OCI-LY7 (cell line): ENCODE measurements at regions of chr3 and their contacts with region 1.

Region 1: GRCh38 chr3:99686955-99687612 is 48.7 kb downstream of the COL8A1 start:
- DNase-seq: peak; percentile 39
- H3K4me3 ChIP-seq: no peak overlapping the region
- H3K27ac ChIP-seq: no peak overlapping the region
- H3K4me1 ChIP-seq: no peaks in the 10 kb centered on the region
- CTCF ChIP-seq: peak; percentile 87

Region 2: GRCh38 chr3:99645277-99646106 is 41.6 kb before region 1 on chr3:
- CTCF ChIA-PET with region 1: no interaction called
- POLR2A ChIA-PET with region 1: no interaction called
- intact Hi-C with region 1: loop called (anchors 2 kb)
- DNase-seq: peak; percentile 0
- H3K4me3 ChIP-seq: no peak overlapping the region
- H3K27ac ChIP-seq: no peak overlapping the region
- H3K4me1 ChIP-seq: no peaks in the 10 kb centered on the region
- CTCF ChIP-seq: peak; percentile 83